ENCODE measurements at regions of chr4 and their contacts with region 1.

Region 1: DNA sequence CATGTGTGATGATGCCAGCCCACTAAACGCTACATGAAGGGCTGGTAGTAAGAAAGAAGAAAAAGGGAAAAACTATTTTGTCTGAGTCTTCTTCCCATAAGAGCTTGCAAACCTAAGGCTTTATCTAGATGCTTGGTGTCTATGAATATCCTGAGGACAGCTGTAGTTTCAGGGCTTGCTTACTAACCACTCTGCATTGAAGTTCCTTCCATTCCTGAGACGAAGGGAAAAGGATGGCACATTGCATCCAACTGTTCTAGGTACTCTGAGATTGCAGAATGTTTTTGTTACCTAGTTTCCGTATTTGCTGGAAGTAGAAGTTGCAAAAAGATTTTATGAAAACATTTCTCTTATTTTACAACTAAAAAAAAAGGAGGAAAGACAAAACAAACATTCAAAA is 544.6 kb downstream of the IL15 start:
- DNase-seq: no peak
- ATAC-seq: no peak
- H3K4me3 ChIP-seq: no peak overlapping the region
- H3K27ac ChIP-seq: no peak overlapping the region
- H3K4me1 ChIP-seq: no peaks in the 10 kb centered on the region
- H3K27me3 ChIP-seq: no peaks in the 10 kb centered on the region
- CTCF ChIP-seq: no peak

Region 2: DNA sequence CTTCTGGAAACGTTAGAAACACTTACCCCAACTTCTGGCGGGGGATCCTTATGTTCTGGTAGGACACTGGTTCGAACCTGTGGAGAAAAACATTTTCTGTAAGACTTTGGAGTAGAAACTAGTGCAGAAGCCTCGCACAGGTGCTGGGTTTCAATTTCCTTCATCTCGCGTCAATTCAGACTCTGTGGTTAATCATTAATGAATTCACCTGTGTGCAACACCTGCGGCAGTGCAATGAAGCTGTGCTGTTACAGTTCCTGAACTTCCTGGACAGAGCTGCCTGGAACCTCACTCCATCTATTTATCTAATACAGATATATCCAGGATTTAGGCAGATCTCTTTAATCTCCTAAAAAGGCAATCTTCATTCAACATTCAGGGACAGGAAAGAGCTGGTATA is 133.7 kb after region 1 on chr4:
- CTCF ChIA-PET with region 1: interaction called, 10 read pairs
- POLR2A ChIA-PET with region 1: no interaction called
- in situ Hi-C with region 1: no loop called
- intact Hi-C with region 1: no loop called
- DNase-seq: no peak
- ATAC-seq: no peak
- H3K4me3 ChIP-seq: no peak overlapping the region
- H3K27ac ChIP-seq: no peak overlapping the region
- H3K4me1 ChIP-seq: no peaks in the 10 kb centered on the region
- H3K27me3 ChIP-seq: no peaks in the 10 kb centered on the region
- CTCF ChIP-seq: no peak

Measured in Panc1 (cell line).